HepG2 (cell line): ENCODE measurements at regions of chr1 and their contacts with region 1.

Region 1: GRCh38 chr1:44775078-44775929 is at the start of gene RPS8:
- DNase-seq: peak; percentile 91
- ATAC-seq: peak; percentile 80
- H3K4me3 ChIP-seq: peak within 1 kb of the TSS; percentile 84 to 97 (median 96)
- H3K27ac ChIP-seq: peak within 1 kb of the TSS; percentile 81
- H3K4me1 ChIP-seq: peaks cover 40% of the 10 kb centered on the region
- H3K27me3 ChIP-seq: no peaks in the 10 kb centered on the region; a peak in 1 of 5 replicates
- CTCF ChIP-seq: 0 out of 2 replicates have a peak, but pooled peaks have one; percentile 9
- EP300 ChIP-seq: 0 out of 4 replicates have a peak, but pooled peaks of 1 of the 2 experiments have one; percentile 11
- POLR2A ChIP-seq: peak; percentile 99
- RAD21 ChIP-seq: peak; percentile 39
- total RNA-seq, gene RPS8: 2,628 and 3,186 TPM in 2 replicates

Region 2: GRCh38 chr1:44760876-44761275 is 14.4 kb before region 1 on chr1:
- CTCF ChIA-PET with region 1: no interaction called
- POLR2A ChIA-PET with region 1: interaction called, 16 read pairs
- in situ Hi-C with region 1: no loop called
- intact Hi-C with region 1: no loop called
- DNase-seq: no peak
- ATAC-seq: no peak
- H3K4me3 ChIP-seq: no peak overlapping the region
- H3K27ac ChIP-seq: no peak overlapping the region
- H3K4me1 ChIP-seq: no peaks in the 10 kb centered on the region
- H3K27me3 ChIP-seq: no peaks in the 10 kb centered on the region
- CTCF ChIP-seq: no peak
- EP300 ChIP-seq: no peak
- POLR2A ChIP-seq: no peak
- RAD21 ChIP-seq: no peak

Region 3: DNA sequence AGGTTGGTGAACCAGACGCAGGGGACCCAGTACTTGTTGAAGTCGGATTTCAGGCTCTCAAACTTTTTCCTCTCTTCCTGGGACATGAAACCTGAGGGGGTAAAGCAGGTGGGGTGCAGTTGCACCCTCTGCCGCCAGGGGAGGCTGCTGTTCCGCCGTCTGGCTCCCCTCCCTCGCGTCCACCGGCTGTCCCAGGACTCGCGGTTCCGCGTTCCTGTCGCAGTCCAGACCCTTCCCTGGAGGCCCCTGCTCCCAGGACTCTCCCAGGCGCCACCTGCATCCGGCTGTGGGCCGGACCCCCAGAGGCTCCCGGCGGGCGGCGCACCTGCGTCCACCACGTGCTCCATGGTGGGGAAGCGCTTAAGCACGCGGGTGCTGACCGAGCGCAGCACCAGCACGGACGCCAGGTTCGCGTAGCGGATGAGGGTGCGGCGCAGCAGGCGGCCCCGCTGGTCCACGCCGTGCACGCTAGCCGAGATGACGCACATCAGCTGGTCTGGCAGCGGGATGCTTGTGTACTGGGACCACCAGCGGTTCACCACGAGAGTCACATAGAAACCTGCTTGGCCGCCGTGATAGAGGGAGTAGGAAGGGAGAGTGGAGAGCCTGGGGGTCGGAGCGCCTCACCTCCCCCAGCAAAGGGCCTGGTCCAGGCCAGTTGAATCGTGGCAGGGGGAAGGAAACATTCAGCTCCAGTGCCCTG is 11.0 kb after region 1 on chr1:
- CTCF ChIA-PET with region 1: no interaction called
- POLR2A ChIA-PET with region 1: interaction called, 47 read pairs
- in situ Hi-C with region 1: no loop called
- intact Hi-C with region 1: no loop called
- DNase-seq: peak; percentile 60
- ATAC-seq: peak; percentile 23
- H3K4me3 ChIP-seq: peak overlapping the region in 2 of 3 experiments; percentile 34 to 79; a peak in 3 of 6 replicates
- H3K27ac ChIP-seq: no peak overlapping the region
- H3K4me1 ChIP-seq: peaks cover 61% of the 10 kb centered on the region
- H3K27me3 ChIP-seq: peaks cover 3 to 17% of the 10 kb centered on the region in 2 experiments; a peak in 2 of 5 replicates
- CTCF ChIP-seq: peak; percentile 91
- EP300 ChIP-seq: peak; percentile 9 to 62; a peak in 1 of 4 replicates
- POLR2A ChIP-seq: no peak; a peak in 1 of 4 replicates
- RAD21 ChIP-seq: peak; percentile 87

Region 4: DNA sequence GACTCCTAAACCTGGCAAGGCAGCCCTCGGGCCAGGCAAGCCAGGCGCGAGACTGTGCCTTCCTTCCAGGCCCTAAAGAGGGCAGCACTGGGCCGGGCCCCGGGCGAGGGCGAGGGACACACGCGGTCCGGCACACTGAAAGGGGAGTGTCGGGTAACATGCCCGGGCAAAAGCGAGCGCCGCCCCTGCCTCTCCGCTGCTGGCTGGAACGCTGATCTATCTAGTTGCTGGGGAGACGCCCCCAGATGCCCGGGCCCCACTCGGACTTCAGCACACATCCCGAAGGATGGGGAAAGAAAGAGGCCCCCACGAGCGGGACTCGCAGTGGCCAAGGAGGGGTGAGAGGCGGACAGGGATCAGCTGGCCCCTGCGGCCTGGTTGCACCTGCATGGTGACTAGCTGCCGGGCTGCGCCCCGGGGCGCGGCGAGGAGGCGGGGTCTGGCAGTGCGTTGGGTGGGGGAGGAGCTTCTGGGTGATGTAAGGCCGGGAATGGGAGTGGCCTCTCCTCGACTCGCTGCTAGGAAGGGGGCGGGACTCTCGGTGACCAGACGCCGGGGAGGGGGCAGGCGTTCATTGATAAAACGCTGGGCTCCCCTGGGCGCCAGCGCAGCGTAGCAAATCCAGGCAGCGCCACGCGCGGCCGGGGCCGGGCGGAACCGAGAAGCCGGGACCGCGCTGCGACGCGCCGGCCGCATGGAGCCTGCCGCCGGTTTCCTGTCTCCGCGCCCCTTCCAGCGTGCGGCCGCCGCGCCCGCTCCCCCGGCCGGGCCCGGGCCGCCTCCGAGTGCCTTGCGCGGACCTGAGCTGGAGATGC is 24.7 kb after region 1 on chr1 and contains the start of gene PLK3:
- CTCF ChIA-PET with region 1: no interaction called
- POLR2A ChIA-PET with region 1: interaction called, 21 read pairs
- in situ Hi-C with region 1: no loop called
- intact Hi-C with region 1: no loop called
- DNase-seq: peak; percentile 92
- ATAC-seq: peak; percentile 86
- H3K4me3 ChIP-seq: peak within 1 kb of the TSS; percentile 69 to 91 (median 90)
- H3K27ac ChIP-seq: peak within 1 kb of the TSS; percentile 94
- H3K4me1 ChIP-seq: peaks cover 44% of the 10 kb centered on the region
- H3K27me3 ChIP-seq: no peaks in the 10 kb centered on the region
- CTCF ChIP-seq: peak; percentile 98
- EP300 ChIP-seq: peak; percentile 13 to 54; a peak in 1 of 4 replicates
- POLR2A ChIP-seq: peak in 1 of 2 experiments; percentile 92; a peak in 2 of 4 replicates
- RAD21 ChIP-seq: peak; percentile 92
- total RNA-seq, gene PLK3: 4.5 and 9.8 TPM in 2 replicates

Region 5: GRCh38 chr1:44819608-44820327 is 44.5 kb after region 1 on chr1:
- CTCF ChIA-PET with region 1: no interaction called
- POLR2A ChIA-PET with region 1: interaction called, 27 read pairs
- in situ Hi-C with region 1: no loop called
- intact Hi-C with region 1: loop called (anchors 5 kb)
- DNase-seq: peak; percentile 90
- ATAC-seq: peak; percentile 89
- H3K4me3 ChIP-seq: peak overlapping the region; percentile 57 to 80 (median 64)
- H3K27ac ChIP-seq: peak overlapping the region; percentile 100
- H3K4me1 ChIP-seq: peaks cover 30% of the 10 kb centered on the region
- H3K27me3 ChIP-seq: no peaks in the 10 kb centered on the region
- CTCF ChIP-seq: peak; percentile 36; the same call in 1 of the 2 replicates
- EP300 ChIP-seq: peak; percentile 64 to 75; a peak in 2 of 4 replicates
- POLR2A ChIP-seq: peak in 1 of 2 experiments; percentile 100; a peak in 2 of 4 replicates
- RAD21 ChIP-seq: peak; percentile 38